B cell (primary cell): ENCODE measurements at regions of chr1 and their contacts with region 1.

Region 1: DNA sequence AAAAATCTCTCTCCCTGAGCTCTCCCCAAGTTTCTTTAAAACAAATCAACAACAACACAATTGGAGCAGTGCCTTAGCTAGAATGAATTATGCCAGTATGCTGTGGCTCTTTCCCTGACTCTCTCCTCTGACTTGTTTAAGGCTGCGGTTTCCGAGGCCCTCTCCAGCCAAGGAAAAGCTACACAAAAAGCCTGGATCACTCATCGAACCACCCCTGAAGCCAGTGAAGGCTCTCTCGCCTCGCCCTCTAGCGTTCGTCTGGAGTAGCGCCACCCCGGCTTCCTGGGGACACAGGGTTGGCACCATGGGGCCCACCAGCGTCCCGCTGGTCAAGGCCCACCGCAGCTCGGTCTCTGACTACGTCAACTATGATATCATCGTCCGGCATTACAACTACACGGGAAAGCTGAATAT is 1.9 kb downstream of the S1PR1 start:
- DNase-seq: peak; percentile 83
- ATAC-seq: peak; percentile 13
- H3K4me3 ChIP-seq: peak overlapping the region; percentile 74 to 98 (median 86)
- H3K4me3 Mint-ChIP-seq: peak overlapping the region; percentile 97
- H3K27ac ChIP-seq: peak overlapping the region; percentile 58 to 84
- H3K27ac Mint-ChIP-seq: peak overlapping the region; percentile 92
- H3K4me1 ChIP-seq: peaks cover 51 to 59% of the 10 kb centered on the region in 2 donors
- H3K4me1 Mint-ChIP-seq: peaks cover 66% of the 10 kb centered on the region
- H3K27me3 ChIP-seq: no peaks in the 10 kb centered on the region
- H3K27me3 Mint-ChIP-seq: no peaks in the 10 kb centered on the region
- CTCF ChIP-seq: peak; percentile 95

Region 2: DNA sequence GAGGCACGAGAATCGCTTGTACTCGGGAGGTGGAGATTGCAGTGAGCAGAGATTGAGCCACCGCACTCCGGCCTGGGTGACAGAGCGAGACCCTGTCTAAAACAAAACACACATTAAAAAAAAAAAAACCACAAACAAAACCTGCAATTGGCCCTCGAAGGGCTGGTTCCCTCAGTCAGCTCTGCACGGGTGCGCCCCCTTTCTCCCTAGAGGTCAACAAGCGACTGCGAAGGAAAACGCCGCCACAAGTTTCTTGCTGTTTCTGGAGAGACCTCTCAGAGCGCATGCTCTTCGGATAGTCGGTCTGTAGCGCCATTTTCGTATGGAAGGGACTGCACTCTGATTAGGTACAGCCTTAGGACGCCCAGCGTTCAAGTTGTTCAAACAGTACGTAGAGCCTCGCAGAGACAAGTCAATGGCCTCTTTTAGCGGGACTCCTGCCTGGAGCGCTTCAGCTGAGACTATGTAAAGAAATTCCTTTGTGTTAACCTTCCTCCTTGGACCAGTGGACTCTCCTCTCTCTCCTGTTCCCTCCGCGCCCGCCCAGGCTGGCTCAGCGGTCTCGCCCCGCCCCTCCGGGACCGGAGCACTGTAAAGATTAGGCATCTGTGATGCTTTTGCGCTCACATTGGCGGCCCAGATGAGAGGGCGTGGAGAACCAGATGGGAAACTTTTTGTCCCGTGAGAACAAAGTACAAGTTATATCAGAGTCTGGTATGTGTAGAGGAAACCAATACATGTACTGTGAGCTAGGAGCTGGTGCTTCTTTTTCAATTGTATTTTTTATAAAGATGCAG is 887.4 kb before region 1 on chr1:
- CTCF ChIA-PET with region 1: no interaction called
- POLR2A ChIA-PET with region 1: no interaction called
- intact Hi-C with region 1: loop called (anchors 5 kb)
- DNase-seq: peak; percentile 91
- ATAC-seq: peak; percentile 58
- H3K4me3 ChIP-seq: peak overlapping the region; percentile 85 to 99 (median 97)
- H3K4me3 Mint-ChIP-seq: peak overlapping the region; percentile 91
- H3K27ac ChIP-seq: peak overlapping the region; percentile 52 to 87
- H3K27ac Mint-ChIP-seq: peak overlapping the region; percentile 92
- H3K4me1 ChIP-seq: peaks cover 10 to 16% of the 10 kb centered on the region in 2 donors
- H3K4me1 Mint-ChIP-seq: peaks cover 37% of the 10 kb centered on the region
- H3K27me3 ChIP-seq: no peaks in the 10 kb centered on the region
- H3K27me3 Mint-ChIP-seq: no peaks in the 10 kb centered on the region
- CTCF ChIP-seq: no peak

Region 3: GRCh38 chr1:100936194-100936967 is 302.3 kb before region 1 on chr1:
- CTCF ChIA-PET with region 1: interaction called, 6 read pairs
- POLR2A ChIA-PET with region 1: interaction called, 5 read pairs
- intact Hi-C with region 1: loop called (anchors 5 kb)
- DNase-seq: no peak
- ATAC-seq: no peak
- H3K4me3 ChIP-seq: no peak overlapping the region
- H3K4me3 Mint-ChIP-seq: no peak overlapping the region
- H3K27ac ChIP-seq: no peak overlapping the region
- H3K27ac Mint-ChIP-seq: no peak overlapping the region
- H3K4me1 ChIP-seq: peaks cover 3% of the 10 kb centered on the region in 2 donors
- H3K4me1 Mint-ChIP-seq: peaks cover 12% of the 10 kb centered on the region
- H3K27me3 ChIP-seq: no peaks in the 10 kb centered on the region
- H3K27me3 Mint-ChIP-seq: no peaks in the 10 kb centered on the region
- CTCF ChIP-seq: no peak

Region 4: GRCh38 chr1:101051688-101052638 is 186.7 kb before region 1 on chr1:
- CTCF ChIA-PET with region 1: interaction called, 10 read pairs
- POLR2A ChIA-PET with region 1: no interaction called
- intact Hi-C with region 1: no loop called
- DNase-seq: peak; percentile 75
- ATAC-seq: peak; percentile 83
- H3K4me3 ChIP-seq: peak overlapping the region in 4 of 5 experiments; percentile 2 to 41 (median 22)
- H3K4me3 Mint-ChIP-seq: peak overlapping the region; percentile 81
- H3K27ac ChIP-seq: peak overlapping the region; percentile 78 to 80
- H3K27ac Mint-ChIP-seq: peak overlapping the region; percentile 80
- H3K4me1 ChIP-seq: peaks cover 37 to 41% of the 10 kb centered on the region in 2 donors
- H3K4me1 Mint-ChIP-seq: peaks cover 57% of the 10 kb centered on the region
- H3K27me3 ChIP-seq: no peaks in the 10 kb centered on the region
- H3K27me3 Mint-ChIP-seq: no peaks in the 10 kb centered on the region
- CTCF ChIP-seq: no peak

Region 5: DNA sequence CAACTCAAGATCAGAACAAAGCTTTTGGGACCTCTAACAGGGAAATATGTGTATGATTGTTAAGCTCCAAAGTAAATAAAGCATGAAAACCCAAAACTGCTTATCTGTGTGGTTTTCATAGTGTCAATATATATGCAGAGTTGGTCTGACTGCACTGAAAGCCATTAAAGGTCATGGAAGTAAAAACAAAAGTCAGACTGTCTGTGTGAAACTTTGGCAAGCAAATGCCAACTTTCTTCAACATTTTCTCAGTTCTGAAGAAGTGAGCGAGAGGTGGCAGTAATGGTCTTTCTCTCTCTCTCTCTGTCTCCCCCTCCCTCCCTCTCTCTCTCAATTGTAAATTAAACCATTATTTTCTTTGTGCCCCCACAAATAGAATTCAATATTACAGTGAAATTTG is 101.9 kb before region 1 on chr1:
- CTCF ChIA-PET with region 1: interaction called, 81 read pairs
- POLR2A ChIA-PET with region 1: interaction called, 19 read pairs
- intact Hi-C with region 1: loop called (anchors 1 kb)
- DNase-seq: peak; percentile 54
- ATAC-seq: peak; percentile 70
- H3K4me3 ChIP-seq: no peak overlapping the region
- H3K4me3 Mint-ChIP-seq: peak overlapping the region; percentile 17
- H3K27ac ChIP-seq: peak overlapping the region; percentile 1 to 32
- H3K27ac Mint-ChIP-seq: peak overlapping the region; percentile 70
- H3K4me1 ChIP-seq: peaks cover 38 to 40% of the 10 kb centered on the region in 2 donors
- H3K4me1 Mint-ChIP-seq: peaks cover 49% of the 10 kb centered on the region
- H3K27me3 ChIP-seq: no peaks in the 10 kb centered on the region
- H3K27me3 Mint-ChIP-seq: no peaks in the 10 kb centered on the region
- CTCF ChIP-seq: no peak

Region 6: GRCh38 chr1:101190441-101190840 is 48.2 kb before region 1 on chr1:
- CTCF ChIA-PET with region 1: interaction called, 6 read pairs
- POLR2A ChIA-PET with region 1: no interaction called
- intact Hi-C with region 1: loop called (anchors 5 kb)
- DNase-seq: no peak
- ATAC-seq: no peak
- H3K4me3 ChIP-seq: no peak overlapping the region
- H3K4me3 Mint-ChIP-seq: no peak overlapping the region
- H3K27ac ChIP-seq: no peak overlapping the region
- H3K27ac Mint-ChIP-seq: no peak overlapping the region
- H3K4me1 ChIP-seq: peaks cover 10% of the 10 kb centered on the region in 2 donors
- H3K4me1 Mint-ChIP-seq: peaks cover 17% of the 10 kb centered on the region
- H3K27me3 ChIP-seq: no peaks in the 10 kb centered on the region
- H3K27me3 Mint-ChIP-seq: no peaks in the 10 kb centered on the region
- CTCF ChIP-seq: no peak

Region 7: GRCh38 chr1:101309334-101310311 is 70.9 kb after region 1 on chr1:
- CTCF ChIA-PET with region 1: interaction called, 11 read pairs
- POLR2A ChIA-PET with region 1: interaction called, 6 read pairs
- intact Hi-C with region 1: loop called (anchors 2 kb)
- DNase-seq: peak; percentile 87
- ATAC-seq: peak; percentile 75
- H3K4me3 ChIP-seq: peak overlapping the region; percentile 23 to 60 (median 43)
- H3K4me3 Mint-ChIP-seq: peak overlapping the region; percentile 86
- H3K27ac ChIP-seq: peak overlapping the region; percentile 86 to 97
- H3K27ac Mint-ChIP-seq: peak overlapping the region; percentile 91
- H3K4me1 ChIP-seq: peaks cover 58 to 67% of the 10 kb centered on the region in 2 donors
- H3K4me1 Mint-ChIP-seq: peaks cover 75% of the 10 kb centered on the region
- H3K27me3 ChIP-seq: no peaks in the 10 kb centered on the region
- H3K27me3 Mint-ChIP-seq: no peaks in the 10 kb centered on the region
- CTCF ChIP-seq: peak; percentile 78

Region 8: GRCh38 chr1:101463195-101463594 is 224.5 kb after region 1 on chr1:
- CTCF ChIA-PET with region 1: no interaction called
- POLR2A ChIA-PET with region 1: no interaction called
- intact Hi-C with region 1: no loop called
- DNase-seq: no peak
- ATAC-seq: no peak
- H3K4me3 ChIP-seq: no peak overlapping the region
- H3K4me3 Mint-ChIP-seq: no peak overlapping the region
- H3K27ac ChIP-seq: no peak overlapping the region
- H3K27ac Mint-ChIP-seq: no peak overlapping the region
- H3K4me1 ChIP-seq: no peaks in the 10 kb centered on the region
- H3K4me1 Mint-ChIP-seq: no peaks in the 10 kb centered on the region
- H3K27me3 ChIP-seq: no peaks in the 10 kb centered on the region
- H3K27me3 Mint-ChIP-seq: no peaks in the 10 kb centered on the region
- CTCF ChIP-seq: no peak